WTC11 (cell line): ENCODE measurements at regions of chr12 and their contacts with region 1.

Region 1: GRCh38 chr12:121793838-121794533 is 498 bp upstream of the RHOF start:
- DNase-seq: peak; percentile 95
- ATAC-seq: peak; percentile 60
- H3K4me3 Mint-ChIP-seq: peak overlapping the region; percentile 71
- H3K27ac Mint-ChIP-seq: peak overlapping the region; percentile 90
- H3K4me1 Mint-ChIP-seq: peaks cover 49% of the 10 kb centered on the region
- H3K27me3 Mint-ChIP-seq: no peaks in the 10 kb centered on the region; the same call in 1 of the 2 replicates
- CTCF ChIP-seq: peak; percentile 87

Region 2: DNA sequence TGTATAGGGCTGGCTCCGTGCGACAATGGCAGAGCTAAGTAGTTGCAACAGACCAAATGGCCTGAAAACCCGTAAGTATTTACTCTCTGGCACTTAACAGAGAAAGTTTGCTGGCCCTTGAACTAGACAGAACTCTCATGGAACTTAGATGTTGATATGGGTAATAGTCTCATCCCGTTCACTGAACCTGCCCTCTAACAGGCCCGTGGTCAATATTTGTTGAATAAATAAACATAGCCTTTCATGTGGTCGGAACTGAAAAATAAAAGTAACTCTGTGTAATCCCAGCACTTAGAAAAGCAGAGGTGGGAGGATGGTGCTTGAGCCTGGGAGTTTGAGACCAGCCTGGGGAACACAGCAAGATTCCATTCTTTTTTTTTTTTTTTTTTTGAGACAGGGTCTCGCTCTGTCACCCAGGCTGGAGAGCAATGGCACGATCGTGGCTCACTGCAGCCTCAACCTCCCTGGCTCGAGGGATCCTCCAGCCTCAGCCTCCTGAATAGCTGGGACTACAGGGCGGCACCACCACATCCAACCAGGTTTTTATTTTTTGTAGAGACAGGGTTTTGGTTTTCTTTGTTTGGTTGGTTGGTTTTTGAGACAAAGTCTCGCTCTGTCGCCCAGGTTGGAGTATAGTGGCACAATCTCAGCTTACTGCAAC is 242.9 kb before region 1 on chr12:
- CTCF ChIA-PET with region 1: interaction called, 13 read pairs
- POLR2A ChIA-PET with region 1: no interaction called
- DNase-seq: no peak
- ATAC-seq: no peak
- H3K4me3 Mint-ChIP-seq: no peak overlapping the region
- H3K27ac Mint-ChIP-seq: no peak overlapping the region
- H3K4me1 Mint-ChIP-seq: peaks cover 8% of the 10 kb centered on the region
- H3K27me3 Mint-ChIP-seq: no peaks in the 10 kb centered on the region
- CTCF ChIP-seq: no peak

Region 3: GRCh38 chr12:121712461-121713256 is 81.3 kb before region 1 on chr12 and contains the start of gene TMEM120B:
- CTCF ChIA-PET with region 1: interaction called, 32 read pairs
- POLR2A ChIA-PET with region 1: interaction called, 11 read pairs
- DNase-seq: peak; percentile 71
- ATAC-seq: peak; percentile 85
- H3K4me3 Mint-ChIP-seq: peak within 1 kb of the TSS; percentile 90
- H3K27ac Mint-ChIP-seq: peak within 1 kb of the TSS; percentile 96
- H3K4me1 Mint-ChIP-seq: peaks cover 36% of the 10 kb centered on the region
- H3K27me3 Mint-ChIP-seq: no peaks in the 10 kb centered on the region
- CTCF ChIP-seq: no peak
- total RNA-seq, gene TMEM120B: 30.7 to 36.9 TPM (median 33.6 TPM) in 3 replicates

Region 4: DNA sequence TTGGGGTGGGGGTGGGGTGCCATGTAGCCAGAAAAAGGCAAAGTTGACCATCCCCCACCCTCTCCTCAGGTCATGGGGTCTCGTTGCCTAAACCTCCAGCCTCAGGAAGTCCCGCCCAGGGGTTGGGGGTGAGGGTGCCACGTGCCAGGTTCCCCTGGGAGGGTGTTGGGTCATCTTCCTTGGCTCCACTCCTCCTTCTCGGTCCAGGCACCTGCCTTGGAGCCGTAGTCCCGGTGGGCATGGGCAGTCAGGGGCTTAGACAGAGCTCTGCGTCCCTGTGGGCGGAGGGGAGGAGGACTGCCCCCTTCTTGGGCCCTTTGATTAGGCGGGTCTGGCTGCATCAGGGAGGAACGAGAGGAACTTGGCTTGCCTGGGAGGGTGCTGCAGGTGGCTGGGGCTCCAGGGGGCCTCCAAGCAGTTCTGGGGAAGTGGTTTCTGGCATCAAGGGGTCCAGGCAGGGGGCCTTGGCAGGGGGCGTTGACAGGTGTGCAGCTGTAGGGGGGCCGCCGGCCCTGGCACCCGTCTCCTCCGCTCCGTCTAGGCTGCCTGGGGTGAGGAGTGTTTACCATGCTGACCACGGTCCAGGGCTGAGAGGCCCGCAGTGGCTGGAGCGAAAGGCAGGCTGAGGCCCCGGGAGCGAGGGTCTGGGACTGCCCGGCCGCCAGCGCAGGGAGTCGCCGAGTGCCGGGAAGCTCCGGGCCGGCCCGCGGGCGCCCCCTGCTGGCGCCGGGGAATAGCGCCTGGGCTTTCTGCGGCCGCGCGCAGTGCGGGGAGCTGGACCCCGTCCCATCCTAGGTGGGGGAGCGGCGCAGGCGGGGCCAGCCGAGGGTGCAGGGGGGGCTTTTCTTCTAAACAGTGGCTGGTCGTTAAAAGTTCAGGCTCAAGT is 17.7 kb after region 1 on chr12:
- CTCF ChIA-PET with region 1: interaction called, 532 read pairs
- POLR2A ChIA-PET with region 1: interaction called, 161 read pairs
- DNase-seq: peak; percentile 80
- ATAC-seq: peak; percentile 77
- H3K4me3 Mint-ChIP-seq: peak overlapping the region; percentile 87
- H3K27ac Mint-ChIP-seq: peak overlapping the region; percentile 86
- H3K4me1 Mint-ChIP-seq: peaks cover 32% of the 10 kb centered on the region
- H3K27me3 Mint-ChIP-seq: no peaks in the 10 kb centered on the region
- CTCF ChIP-seq: peak; percentile 98

Region 5: DNA sequence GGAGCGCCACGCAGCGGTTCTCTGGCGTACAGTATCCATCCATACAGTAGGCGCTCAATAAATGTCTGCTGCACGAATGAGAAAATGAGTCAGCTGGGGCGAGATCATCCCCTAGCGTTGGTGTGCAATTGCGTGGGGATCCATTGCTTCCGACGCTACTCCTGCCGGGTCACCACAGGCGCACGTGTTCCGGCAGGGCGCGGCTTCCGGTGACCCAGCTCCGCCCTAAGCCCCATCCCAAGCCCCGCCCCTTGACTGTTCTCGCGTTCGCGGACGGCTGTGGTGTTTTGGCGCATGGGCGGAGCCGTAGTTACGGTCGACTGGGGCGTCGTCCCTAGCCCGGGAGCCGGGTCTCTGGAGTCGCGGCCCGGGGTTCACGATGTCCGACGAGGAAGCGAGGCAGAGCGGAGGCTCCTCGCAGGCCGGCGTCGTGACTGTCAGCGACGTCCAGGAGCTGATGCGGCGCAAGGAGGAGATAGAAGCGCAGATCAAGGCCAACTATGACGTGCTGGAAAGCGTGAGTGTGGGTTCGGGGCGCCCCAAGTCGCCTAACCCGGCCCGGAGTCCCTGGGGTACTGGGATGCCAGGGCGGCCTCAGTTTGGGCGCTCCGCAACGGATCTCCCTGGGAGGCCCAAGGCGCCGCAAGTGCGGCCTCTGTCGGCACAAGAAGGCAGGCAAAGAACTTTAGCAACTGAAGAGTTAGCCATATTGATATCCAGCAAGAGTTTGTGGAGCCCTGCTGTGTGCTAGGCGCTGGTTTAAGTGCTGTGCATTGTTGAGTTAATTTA is 94.7 kb after region 1 on chr12 and contains the start of gene PSMD9:
- CTCF ChIA-PET with region 1: interaction called, 68 read pairs
- POLR2A ChIA-PET with region 1: interaction called, 6 read pairs
- DNase-seq: peak; percentile 98
- ATAC-seq: peak; percentile 94
- H3K4me3 Mint-ChIP-seq: peak within 1 kb of the TSS; percentile 95
- H3K27ac Mint-ChIP-seq: peak within 1 kb of the TSS; percentile 99
- H3K4me1 Mint-ChIP-seq: peaks cover 20% of the 10 kb centered on the region
- H3K27me3 Mint-ChIP-seq: peaks cover 26% of the 10 kb centered on the region
- CTCF ChIP-seq: peak; percentile 26; the same call in 1 of the 2 replicates
- total RNA-seq, gene PSMD9: 35.3 to 36.4 TPM (median 36.2 TPM) in 3 replicates

Region 6: GRCh38 chr12:121980191-121980891 is 186.4 kb after region 1 on chr12:
- CTCF ChIA-PET with region 1: no interaction called
- POLR2A ChIA-PET with region 1: no interaction called
- DNase-seq: no peak
- ATAC-seq: no peak
- H3K4me3 Mint-ChIP-seq: no peak overlapping the region
- H3K27ac Mint-ChIP-seq: 0 out of 2 replicates have a peak overlapping the region, but pooled peaks have one; percentile 59
- H3K4me1 Mint-ChIP-seq: peaks cover 7% of the 10 kb centered on the region
- H3K27me3 Mint-ChIP-seq: no peaks in the 10 kb centered on the region
- CTCF ChIP-seq: no peak

Region 7: DNA sequence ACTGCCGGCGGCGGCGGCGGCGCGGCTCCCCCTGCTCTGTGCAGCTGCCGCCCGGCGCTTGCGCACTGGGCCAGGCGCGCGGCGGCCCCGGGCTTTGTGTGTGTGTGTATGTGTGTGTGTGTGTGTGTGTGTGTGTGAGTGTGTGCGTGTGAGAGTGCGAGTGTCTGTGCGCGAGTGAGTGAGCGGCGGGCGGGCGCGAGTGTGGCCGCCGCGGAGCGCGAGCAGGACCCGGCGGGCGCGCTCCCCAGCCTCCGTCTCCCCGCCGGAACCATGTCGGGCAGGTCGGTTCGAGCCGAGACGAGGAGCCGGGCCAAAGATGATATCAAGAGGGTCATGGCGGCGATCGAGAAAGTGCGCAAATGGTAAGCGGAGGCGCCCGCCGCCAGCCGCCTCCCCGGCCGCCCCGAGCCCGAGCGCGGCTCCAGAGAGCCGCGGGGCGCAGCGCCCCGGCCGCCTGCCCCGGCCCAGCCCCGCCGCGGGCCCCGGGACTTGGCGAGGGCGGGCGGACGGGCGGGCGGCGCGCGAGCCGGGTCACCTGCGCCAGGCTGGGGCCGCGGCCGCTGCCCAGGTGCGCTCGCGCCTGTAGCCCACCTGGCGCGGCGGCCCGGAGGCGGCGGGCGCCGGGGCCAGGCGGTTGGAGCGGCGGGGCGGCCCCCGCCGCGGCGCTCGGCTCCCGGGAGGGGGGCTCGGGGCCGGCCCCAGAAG is 228.0 kb after region 1 on chr12 and contains the start of gene BCL7A:
- CTCF ChIA-PET with region 1: interaction called, 12 read pairs
- POLR2A ChIA-PET with region 1: no interaction called
- DNase-seq: peak; percentile 52
- ATAC-seq: peak; percentile 66
- H3K4me3 Mint-ChIP-seq: peak within 1 kb of the TSS; percentile 88
- H3K27ac Mint-ChIP-seq: no peak within 1 kb of the TSS
- H3K4me1 Mint-ChIP-seq: peaks cover 18% of the 10 kb centered on the region
- H3K27me3 Mint-ChIP-seq: peaks cover 37% of the 10 kb centered on the region
- CTCF ChIP-seq: no peak
- total RNA-seq, gene BCL7A: 14.6 to 19.7 TPM (median 15.8 TPM) in 3 replicates